Caco-2 (cell line): ENCODE measurements at regions of chrX and their contacts with region 1.

Region 1: DNA sequence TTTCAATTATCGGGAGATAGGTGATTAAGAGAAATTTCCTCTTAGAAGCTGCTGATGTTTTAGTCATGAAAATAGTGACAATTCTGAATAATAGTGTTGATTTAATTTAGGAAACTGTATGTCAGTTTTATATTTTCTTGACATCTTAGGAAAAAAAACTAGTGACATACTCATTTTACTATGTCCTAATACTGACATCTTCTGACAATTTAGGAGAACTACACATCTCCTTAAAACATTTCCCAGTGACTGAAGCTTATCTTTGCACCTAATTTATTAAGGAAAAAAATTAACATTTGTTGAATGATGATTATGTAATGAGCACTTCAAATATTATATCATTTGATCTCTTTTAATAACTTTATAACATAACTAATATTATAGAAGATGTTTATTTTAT is 42.0 kb upstream of the RBMXL3 start:
- DNase-seq: no peak
- H3K4me3 ChIP-seq: no peak overlapping the region
- H3K4me3 Mint-ChIP-seq: no peak overlapping the region
- H3K27ac Mint-ChIP-seq: no peak overlapping the region
- H3K4me1 ChIP-seq: no peaks in the 10 kb centered on the region
- H3K4me1 Mint-ChIP-seq: no peaks in the 10 kb centered on the region
- H3K27me3 ChIP-seq: no peaks in the 10 kb centered on the region
- H3K27me3 Mint-ChIP-seq: peaks cover 3% of the 10 kb centered on the region
- CTCF ChIP-seq: peak; percentile 13 to 31

Region 2: DNA sequence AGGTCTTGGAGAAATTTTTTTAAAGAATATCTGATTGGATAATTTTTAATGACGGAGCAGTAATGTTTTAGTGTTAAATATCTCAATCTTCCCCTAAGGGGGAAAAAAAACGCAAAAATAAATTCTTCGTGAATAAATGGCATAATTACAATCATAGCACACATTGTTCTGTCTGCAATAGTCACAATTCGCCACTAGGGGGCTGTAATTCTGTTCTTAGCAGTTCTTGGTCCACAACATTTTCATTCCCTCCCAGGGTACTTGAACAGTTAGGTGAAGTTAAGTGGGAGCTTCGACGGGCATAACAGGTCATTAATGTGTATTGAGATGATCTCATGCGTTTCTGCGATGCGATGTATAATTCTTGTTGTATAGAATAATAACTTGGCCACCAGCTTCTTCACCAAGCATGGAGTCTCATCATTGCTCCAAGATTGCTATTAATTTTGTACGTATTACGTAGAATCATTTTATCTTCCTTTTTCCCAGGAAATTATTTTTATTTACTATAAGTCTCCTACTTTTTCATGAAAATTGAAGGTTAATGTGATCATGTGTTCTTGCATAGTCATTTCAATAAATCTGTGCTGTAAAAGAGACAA is 536.1 kb before region 1 on chrX:
- CTCF ChIA-PET with region 1: no interaction called
- POLR2A ChIA-PET with region 1: no interaction called
- intact Hi-C with region 1: loop called (anchors 5 kb)
- DNase-seq: peak in 1 of 2 experiments; percentile 27
- H3K4me3 ChIP-seq: no peak overlapping the region
- H3K4me3 Mint-ChIP-seq: no peak overlapping the region
- H3K27ac Mint-ChIP-seq: no peak overlapping the region
- H3K4me1 ChIP-seq: no peaks in the 10 kb centered on the region
- H3K4me1 Mint-ChIP-seq: no peaks in the 10 kb centered on the region
- H3K27me3 ChIP-seq: no peaks in the 10 kb centered on the region
- H3K27me3 Mint-ChIP-seq: peaks cover 7% of the 10 kb centered on the region
- CTCF ChIP-seq: peak; percentile 56 to 65

Region 3: GRCh38 chrX:114626323-114626722 is 520.9 kb before region 1 on chrX:
- CTCF ChIA-PET with region 1: no interaction called
- POLR2A ChIA-PET with region 1: no interaction called
- intact Hi-C with region 1: loop called (anchors 5 kb)
- DNase-seq: peak in 1 of 2 experiments; percentile 7
- H3K4me3 ChIP-seq: no peak overlapping the region
- H3K4me3 Mint-ChIP-seq: no peak overlapping the region
- H3K27ac Mint-ChIP-seq: no peak overlapping the region
- H3K4me1 ChIP-seq: no peaks in the 10 kb centered on the region
- H3K4me1 Mint-ChIP-seq: no peaks in the 10 kb centered on the region
- H3K27me3 ChIP-seq: no peaks in the 10 kb centered on the region
- H3K27me3 Mint-ChIP-seq: no peaks in the 10 kb centered on the region
- CTCF ChIP-seq: peak; percentile 36 to 42